ENCODE measurements at regions of chr12 and their contacts with region 1.

Region 1: DNA sequence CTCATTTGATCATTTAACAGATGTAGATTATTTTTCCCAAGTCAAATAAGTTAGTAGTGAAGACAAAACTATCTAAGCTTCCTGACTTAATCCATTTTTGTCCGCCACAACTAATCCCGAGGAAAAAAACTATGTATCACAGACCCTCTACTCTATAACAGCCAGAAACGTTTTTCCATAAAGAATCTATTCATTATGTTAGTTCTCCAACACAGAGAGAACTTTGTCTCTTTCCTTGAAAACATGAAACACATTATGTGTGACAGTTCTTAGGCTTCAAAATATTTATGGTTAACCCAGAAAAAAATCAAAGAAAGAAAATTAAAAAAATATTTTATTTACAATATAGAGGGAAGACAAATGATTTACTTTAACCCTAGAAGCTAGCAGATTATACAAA is 100.1 kb downstream of the PLEKHG7 start:
- DNase-seq: no peak
- ATAC-seq: no peak
- H3K4me3 ChIP-seq: no peak overlapping the region
- H3K27ac ChIP-seq: no peak overlapping the region
- H3K4me1 ChIP-seq: no peaks in the 10 kb centered on the region
- H3K27me3 ChIP-seq: no peaks in the 10 kb centered on the region
- CTCF ChIP-seq: no peak

Region 2: DNA sequence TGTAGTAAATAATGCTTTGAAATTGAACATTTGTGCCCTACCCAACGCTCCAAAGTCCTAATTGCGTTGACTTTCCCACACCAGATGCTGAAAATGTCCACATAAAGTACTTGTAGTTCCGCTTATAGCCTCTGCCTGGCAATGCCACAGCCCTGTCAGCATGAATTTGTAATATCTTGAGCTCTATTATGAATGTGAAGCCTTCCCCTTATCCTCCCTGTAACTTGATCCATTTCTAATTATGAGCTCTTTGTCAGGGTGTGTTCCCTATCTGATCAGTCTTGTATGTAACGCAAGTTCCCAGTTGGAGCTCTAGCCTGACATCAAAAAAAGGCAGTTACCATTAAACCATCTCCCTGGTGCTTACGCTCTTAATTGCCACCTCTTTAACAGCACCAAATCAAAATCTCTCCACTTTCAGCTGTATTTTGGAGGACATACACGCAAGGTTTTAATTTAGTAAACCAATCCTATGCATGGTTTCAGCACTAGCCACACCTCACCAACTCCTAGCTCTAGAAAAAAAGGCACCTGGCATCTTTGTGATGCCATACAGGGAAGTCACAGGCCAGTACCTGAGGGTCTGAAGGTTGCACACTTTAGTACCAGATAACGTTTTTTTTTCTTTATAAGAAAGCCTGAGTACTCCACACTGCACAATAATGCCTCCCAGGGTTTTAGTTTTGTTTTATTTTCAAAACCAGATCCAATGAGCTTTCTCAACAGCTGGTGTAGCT is 56.9 kb after region 1 on chr12:
- intact Hi-C with region 1: loop called in 1 of 2 experiments (anchors 10 kb)
- DNase-seq: no peak
- ATAC-seq: peak; percentile 37 to 84 (median 69)
- H3K4me3 ChIP-seq: no peak overlapping the region
- H3K27ac ChIP-seq: peak overlapping the region; percentile 68
- H3K4me1 ChIP-seq: peaks cover 10% of the 10 kb centered on the region
- H3K27me3 ChIP-seq: no peaks in the 10 kb centered on the region
- CTCF ChIP-seq: no peak

Region 3: GRCh38 chr12:92928962-92929915 is 126.3 kb after region 1 on chr12 and contains the start of gene EEA1:
- intact Hi-C with region 1: loop called in 1 of 2 experiments (anchors 10 kb)
- DNase-seq: peak; percentile 98 to 99
- ATAC-seq: peak; percentile 91 to 95 (median 94)
- H3K4me3 ChIP-seq: peak within 1 kb of the TSS; percentile 94
- H3K27ac ChIP-seq: peak within 1 kb of the TSS; percentile 94
- H3K4me1 ChIP-seq: peaks cover 39% of the 10 kb centered on the region
- H3K27me3 ChIP-seq: no peaks in the 10 kb centered on the region
- CTCF ChIP-seq: peak; percentile 15
- total RNA-seq, gene EEA1: 27.7 to 51.8 (median 37.1) TPM

Region 4: DNA sequence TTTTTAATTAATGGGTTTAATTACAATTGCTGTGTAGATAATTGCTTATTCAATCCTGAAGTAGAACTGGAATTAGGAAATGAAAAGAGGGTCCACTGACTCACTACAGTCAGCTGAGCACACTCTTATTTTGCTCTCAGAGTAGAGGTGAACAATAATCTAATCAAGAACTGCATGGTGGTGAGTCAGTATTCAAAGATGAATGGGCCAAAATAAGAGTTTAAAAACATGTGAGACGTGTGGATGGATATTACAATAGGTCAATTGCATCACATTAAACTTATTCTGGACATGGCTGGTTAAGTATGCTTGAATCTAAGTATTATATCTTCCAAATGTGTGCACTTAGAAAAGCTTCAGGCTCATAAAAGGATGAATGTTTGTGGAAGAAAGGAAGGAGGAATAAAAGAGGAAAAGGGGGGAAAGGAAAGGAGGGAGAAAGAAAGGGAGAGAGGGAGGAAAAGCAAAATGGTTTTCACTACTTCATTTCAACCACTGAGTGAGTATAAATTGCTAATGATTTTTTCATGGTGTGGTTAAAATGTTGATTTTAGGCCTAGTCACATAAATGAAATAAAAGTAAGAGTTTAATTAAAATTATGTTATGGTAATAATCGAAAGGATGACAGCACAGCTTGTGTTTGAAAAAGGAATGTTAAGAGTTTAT is 153.2 kb after region 1 on chr12:
- intact Hi-C with region 1: no loop called
- DNase-seq: no peak
- ATAC-seq: no peak
- H3K4me3 ChIP-seq: no peak overlapping the region
- H3K27ac ChIP-seq: no peak overlapping the region
- H3K4me1 ChIP-seq: no peaks in the 10 kb centered on the region
- H3K27me3 ChIP-seq: no peaks in the 10 kb centered on the region
- CTCF ChIP-seq: no peak

Region 5: DNA sequence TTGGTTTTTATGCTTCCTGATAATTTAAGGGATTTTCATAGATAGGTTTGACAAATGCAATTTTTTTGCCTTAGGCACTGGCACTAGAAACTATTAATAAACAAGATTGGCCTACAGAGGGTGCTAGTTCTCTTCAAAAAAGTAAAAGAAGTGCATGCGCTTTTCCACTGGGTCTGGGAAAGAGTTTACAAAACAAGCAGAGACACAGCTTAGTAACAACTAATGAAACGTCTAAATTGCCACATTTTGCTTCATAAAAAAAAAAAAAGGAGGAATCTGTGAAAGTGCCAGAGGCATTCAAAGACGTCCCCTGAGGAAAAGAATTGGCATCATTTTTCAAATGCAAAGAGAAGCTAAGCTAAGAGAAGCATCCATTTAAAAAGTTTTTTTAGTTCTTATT is 184.5 kb after region 1 on chr12:
- intact Hi-C with region 1: no loop called
- DNase-seq: no peak
- ATAC-seq: peak; percentile 80 to 96 (median 88)
- H3K4me3 ChIP-seq: peak overlapping the region; percentile 23
- H3K27ac ChIP-seq: peak overlapping the region; percentile 72
- H3K4me1 ChIP-seq: peaks cover 12% of the 10 kb centered on the region
- H3K27me3 ChIP-seq: no peaks in the 10 kb centered on the region
- CTCF ChIP-seq: peak; percentile 63

Measured in psoas muscle (tissue), 8 donors.